ENCODE measurements at regions of chr1 and their contacts with region 1.

Region 1: GRCh38 chr1:109532365-109533136 is 7.1 kb upstream of the GPR61 start:
- DNase-seq: peak; percentile 61
- ATAC-seq: peak; percentile 90
- H3K4me3 ChIP-seq: peak overlapping the region in 1 of 2 experiments; percentile 16; a peak in 1 of 4 replicates
- H3K27ac ChIP-seq: peak overlapping the region; percentile 70
- H3K4me1 ChIP-seq: 0 out of 2 replicates have a peak, but pooled peaks cover 3% of the 10 kb centered on the region
- H3K27me3 ChIP-seq: no peaks in the 10 kb centered on the region
- CTCF ChIP-seq: peak; percentile 89

Region 2: DNA sequence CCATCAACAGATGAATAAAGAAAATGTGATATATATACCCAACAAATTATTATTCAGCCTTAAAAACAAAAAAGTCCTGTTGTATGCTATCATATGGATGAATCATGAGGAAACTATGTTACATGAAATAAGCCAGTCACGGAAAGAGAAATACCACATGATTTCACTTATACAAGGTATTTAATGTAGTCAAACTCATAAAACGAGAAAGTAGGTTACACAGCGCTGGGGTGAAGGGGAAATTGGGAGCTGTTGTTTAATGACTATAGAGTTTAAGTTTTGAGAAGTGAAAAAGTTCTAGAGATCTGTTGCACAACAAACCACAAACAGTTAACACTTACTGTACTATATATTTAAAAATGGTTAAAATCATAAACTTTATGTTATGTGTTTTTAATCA is 1390.9 kb before region 1 on chr1:
- CTCF ChIA-PET with region 1: no interaction called
- POLR2A ChIA-PET with region 1: no interaction called
- in situ Hi-C with region 1: no loop called
- intact Hi-C with region 1: no loop called
- DNase-seq: no peak
- ATAC-seq: no peak
- H3K4me3 ChIP-seq: no peak overlapping the region
- H3K27ac ChIP-seq: no peak overlapping the region
- H3K4me1 ChIP-seq: no peaks in the 10 kb centered on the region
- H3K27me3 ChIP-seq: no peaks in the 10 kb centered on the region
- CTCF ChIP-seq: no peak

Region 3: GRCh38 chr1:109438798-109439297 is 93.7 kb before region 1 on chr1:
- CTCF ChIA-PET with region 1: no interaction called
- POLR2A ChIA-PET with region 1: no interaction called
- in situ Hi-C with region 1: no loop called
- intact Hi-C with region 1: loop called (anchors 10 kb)
- DNase-seq: peak; percentile 10
- ATAC-seq: no peak
- H3K4me3 ChIP-seq: no peak overlapping the region
- H3K27ac ChIP-seq: no peak overlapping the region
- H3K4me1 ChIP-seq: no peaks in the 10 kb centered on the region
- H3K27me3 ChIP-seq: peaks cover 9% of the 10 kb centered on the region
- CTCF ChIP-seq: no peak

Region 4: GRCh38 chr1:109468903-109469302 is 63.6 kb before region 1 on chr1:
- CTCF ChIA-PET with region 1: interaction called, 13 read pairs
- POLR2A ChIA-PET with region 1: no interaction called
- in situ Hi-C with region 1: no loop called
- intact Hi-C with region 1: no loop called
- DNase-seq: no peak
- ATAC-seq: no peak
- H3K4me3 ChIP-seq: no peak overlapping the region
- H3K27ac ChIP-seq: no peak overlapping the region
- H3K4me1 ChIP-seq: no peaks in the 10 kb centered on the region
- H3K27me3 ChIP-seq: peaks cover 13% of the 10 kb centered on the region
- CTCF ChIP-seq: no peak

Region 5: GRCh38 chr1:109493805-109494539 is 38.6 kb before region 1 on chr1 and contains the start of gene CYB561D1:
- CTCF ChIA-PET with region 1: interaction called, 23 read pairs
- POLR2A ChIA-PET with region 1: no interaction called
- in situ Hi-C with region 1: no loop called
- intact Hi-C with region 1: loop called (anchors 2 kb)
- DNase-seq: peak; percentile 47
- ATAC-seq: peak; percentile 94
- H3K4me3 ChIP-seq: peak within 1 kb of the TSS; percentile 71 to 75
- H3K27ac ChIP-seq: peak within 1 kb of the TSS; percentile 73
- H3K4me1 ChIP-seq: peaks cover 6% of the 10 kb centered on the region; the same call in 1 of the 2 replicates
- H3K27me3 ChIP-seq: no peaks in the 10 kb centered on the region
- CTCF ChIP-seq: peak; percentile 94
- total RNA-seq, gene CYB561D1: 4.5 TPM

Region 6: DNA sequence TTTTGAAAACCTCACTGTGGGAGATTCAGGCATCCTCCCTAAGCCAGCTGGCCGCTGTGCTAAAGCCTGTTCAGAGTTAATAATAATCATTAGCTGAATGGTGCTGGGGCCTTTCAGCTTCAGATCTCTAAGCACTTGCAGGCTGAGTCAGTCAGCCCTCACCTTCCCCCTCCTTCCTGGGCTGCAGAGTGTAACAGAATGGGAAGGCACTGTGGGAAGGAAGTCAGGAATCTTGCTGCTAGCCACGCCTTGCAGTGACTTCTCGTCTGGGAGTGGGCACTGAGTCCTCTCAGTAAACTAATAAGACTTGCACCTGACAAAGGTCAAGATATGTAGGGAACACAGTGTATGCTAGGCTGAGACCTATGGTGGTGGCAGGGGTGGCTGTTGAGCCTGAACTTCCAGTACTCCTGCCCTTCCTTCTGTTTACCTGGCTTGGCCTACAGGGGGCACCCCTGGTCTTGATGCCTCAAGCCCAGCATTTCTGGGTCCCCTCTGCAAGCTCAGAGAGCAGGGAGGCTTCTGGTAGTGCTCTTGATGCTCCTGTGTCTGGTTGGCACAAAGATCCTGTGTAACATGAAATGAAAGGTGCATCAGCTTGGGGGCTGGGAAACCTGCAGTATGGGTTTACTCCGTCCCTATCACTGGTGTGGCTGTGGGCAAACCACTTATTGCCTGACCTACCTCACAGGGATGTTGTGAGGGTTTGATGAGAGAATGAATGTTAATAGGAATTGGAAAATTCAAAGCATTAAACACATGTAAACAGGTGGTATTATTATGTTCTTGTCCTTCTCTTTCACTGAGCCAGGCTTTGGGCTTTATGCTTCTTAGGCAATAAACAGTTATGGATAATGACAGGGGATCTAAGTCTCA is 32.7 kb before region 1 on chr1:
- CTCF ChIA-PET with region 1: interaction called, 23 read pairs
- POLR2A ChIA-PET with region 1: no interaction called
- in situ Hi-C with region 1: no loop called
- intact Hi-C with region 1: no loop called
- DNase-seq: no peak
- ATAC-seq: peak; percentile 73
- H3K4me3 ChIP-seq: no peak overlapping the region
- H3K27ac ChIP-seq: no peak overlapping the region
- H3K4me1 ChIP-seq: no peaks in the 10 kb centered on the region
- H3K27me3 ChIP-seq: no peaks in the 10 kb centered on the region
- CTCF ChIP-seq: peak; percentile 70

Region 7: DNA sequence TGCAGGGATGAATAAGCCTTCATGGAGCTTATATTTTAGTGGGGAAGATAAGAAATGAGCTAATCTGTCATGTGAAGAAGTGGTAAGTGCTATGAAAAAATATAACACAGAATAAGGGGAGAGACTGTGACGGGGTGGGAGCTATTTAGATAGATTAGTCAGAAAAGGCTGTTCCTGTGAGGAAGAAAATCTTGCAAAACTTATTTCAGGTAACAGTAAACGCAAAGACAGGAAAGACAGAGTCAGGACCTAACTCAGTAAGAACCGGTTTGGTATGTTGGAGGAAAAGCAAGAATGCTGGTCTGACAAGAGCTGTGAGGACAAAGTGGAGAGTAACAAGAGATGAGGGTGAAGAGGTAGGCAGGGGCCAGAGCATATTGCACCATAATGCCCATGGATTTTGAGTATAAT is 37.9 kb after region 1 on chr1:
- CTCF ChIA-PET with region 1: no interaction called
- POLR2A ChIA-PET with region 1: no interaction called
- in situ Hi-C with region 1: no loop called
- intact Hi-C with region 1: no loop called
- DNase-seq: no peak
- ATAC-seq: no peak
- H3K4me3 ChIP-seq: no peak overlapping the region
- H3K27ac ChIP-seq: no peak overlapping the region
- H3K4me1 ChIP-seq: peaks cover 1% of the 10 kb centered on the region; the same call in 1 of the 2 replicates
- H3K27me3 ChIP-seq: no peaks in the 10 kb centered on the region
- CTCF ChIP-seq: no peak